ENCODE measurements at regions of chr16 and their contacts with region 1.

Region 1: GRCh38 chr16:55711959-55712876 is 56.4 kb downstream of the SLC6A2 start:
- DNase-seq: peak; percentile 79
- ATAC-seq: peak; percentile 64
- H3K4me3 Mint-ChIP-seq: no peak overlapping the region
- H3K27ac Mint-ChIP-seq: no peak overlapping the region
- H3K4me1 Mint-ChIP-seq: no peaks in the 10 kb centered on the region
- H3K27me3 Mint-ChIP-seq: peaks cover 13% of the 10 kb centered on the region

Region 2: GRCh38 chr16:55809386-55809785 is 97.2 kb after region 1 on chr16:
- CTCF ChIA-PET with region 1: no interaction called
- POLR2A ChIA-PET with region 1: no interaction called
- intact Hi-C with region 1: no loop called
- DNase-seq: no peak
- ATAC-seq: no peak
- H3K4me3 Mint-ChIP-seq: no peak overlapping the region
- H3K27ac Mint-ChIP-seq: no peak overlapping the region
- H3K4me1 Mint-ChIP-seq: no peaks in the 10 kb centered on the region
- H3K27me3 Mint-ChIP-seq: peaks cover 13% of the 10 kb centered on the region

Region 3: GRCh38 chr16:55842369-55843104 is 130.3 kb after region 1 on chr16:
- CTCF ChIA-PET with region 1: interaction called, 9 read pairs
- POLR2A ChIA-PET with region 1: no interaction called
- intact Hi-C with region 1: loop called (anchors 1 kb)
- DNase-seq: peak; percentile 27
- ATAC-seq: peak; percentile 44
- H3K4me3 Mint-ChIP-seq: no peak overlapping the region
- H3K27ac Mint-ChIP-seq: no peak overlapping the region
- H3K4me1 Mint-ChIP-seq: no peaks in the 10 kb centered on the region
- H3K27me3 Mint-ChIP-seq: peaks cover 17% of the 10 kb centered on the region

Measured in activated CD4-positive, alpha-beta T cell treated with anti-CD3 and anti-CD28 coated beads for 36 hours (primary cell).